Activated CD4-positive, alpha-beta T cell treated with anti-CD3 and anti-CD28 coated beads for 36 hours (primary cell): ENCODE measurements at regions of chr11 and their contacts with region 1.

Region 1: DNA sequence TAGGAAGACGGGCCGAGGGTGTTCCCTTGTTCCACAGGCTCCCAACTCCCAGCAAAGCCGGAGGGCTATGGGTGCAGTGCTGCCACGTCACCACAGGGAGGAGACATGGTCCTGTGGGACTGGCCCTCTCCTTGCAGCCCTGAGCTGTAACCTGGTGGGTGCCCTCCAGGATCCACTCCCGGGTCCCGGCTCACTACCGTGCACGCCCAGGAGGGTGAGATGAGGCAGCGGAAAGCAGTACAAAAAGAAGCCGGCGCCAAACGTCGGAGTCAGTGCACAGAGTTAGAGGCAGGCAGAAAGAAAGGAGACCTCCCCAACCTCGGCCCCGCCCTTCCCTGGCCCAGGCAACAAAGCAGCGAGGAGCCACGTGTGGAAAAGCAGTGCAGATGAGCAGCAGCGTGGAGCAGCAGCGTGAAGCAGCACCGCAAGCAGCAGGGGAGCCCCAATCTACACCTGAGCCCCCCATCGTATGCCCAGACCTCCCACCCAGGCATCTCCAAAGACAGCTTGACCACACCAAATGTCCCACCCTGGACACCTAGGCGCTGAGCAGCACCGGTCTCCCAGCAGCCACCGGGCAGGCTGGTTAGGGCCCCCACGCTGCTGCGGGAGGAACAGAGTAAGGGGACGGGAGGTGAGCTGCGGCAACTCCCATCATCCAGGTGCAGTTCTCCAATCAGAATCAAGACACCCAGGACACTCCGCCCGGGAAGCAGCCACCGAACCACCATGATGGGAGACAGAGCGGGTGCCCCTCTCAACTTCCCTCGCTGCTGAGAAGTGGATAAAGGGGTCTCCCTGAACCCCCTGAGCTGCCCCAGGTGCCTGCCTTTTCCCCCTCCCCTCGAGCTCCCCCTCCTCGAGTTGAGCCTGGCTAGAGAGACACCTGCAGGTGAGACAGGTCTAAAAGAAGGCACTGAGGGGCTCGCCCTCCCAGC is 28.8 kb downstream of the IGSF9B start:
- DNase-seq: peak; percentile 84
- ATAC-seq: peak; percentile 28
- H3K4me3 Mint-ChIP-seq: peak overlapping the region; percentile 62
- H3K27ac Mint-ChIP-seq: peak overlapping the region; percentile 95
- H3K4me1 Mint-ChIP-seq: peaks cover 33% of the 10 kb centered on the region
- H3K27me3 Mint-ChIP-seq: no peaks in the 10 kb centered on the region

Region 2: DNA sequence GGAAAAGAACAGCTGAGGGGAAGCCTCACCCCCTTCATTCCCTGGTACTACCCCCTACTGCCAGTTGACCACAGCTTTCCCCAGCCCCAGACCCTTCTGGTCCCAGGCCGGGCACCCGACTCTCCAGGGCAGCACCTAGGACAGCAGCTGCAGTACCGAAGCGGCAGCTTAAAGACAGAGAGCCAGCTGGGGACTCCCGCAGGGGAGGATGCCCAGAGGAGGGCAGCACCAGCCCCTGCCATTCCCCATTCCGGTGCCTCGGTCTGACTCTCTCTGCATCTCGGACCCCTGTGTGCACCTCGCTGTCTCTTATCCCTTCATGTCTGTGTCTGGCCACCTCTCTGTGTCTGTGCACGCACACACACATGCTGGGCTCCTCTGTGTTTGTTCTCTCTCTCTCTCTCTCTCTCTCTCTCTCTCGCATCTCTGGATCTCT is 19.4 kb after region 1 on chr11:
- CTCF ChIA-PET with region 1: interaction called, 20 read pairs
- POLR2A ChIA-PET with region 1: interaction called, 11 read pairs
- intact Hi-C with region 1: loop called (anchors 1 kb)
- DNase-seq: peak; percentile 87
- ATAC-seq: peak; percentile 27
- H3K4me3 Mint-ChIP-seq: peak overlapping the region; percentile 65
- H3K27ac Mint-ChIP-seq: peak overlapping the region; percentile 85
- H3K4me1 Mint-ChIP-seq: peaks cover 75% of the 10 kb centered on the region
- H3K27me3 Mint-ChIP-seq: no peaks in the 10 kb centered on the region

Region 3: DNA sequence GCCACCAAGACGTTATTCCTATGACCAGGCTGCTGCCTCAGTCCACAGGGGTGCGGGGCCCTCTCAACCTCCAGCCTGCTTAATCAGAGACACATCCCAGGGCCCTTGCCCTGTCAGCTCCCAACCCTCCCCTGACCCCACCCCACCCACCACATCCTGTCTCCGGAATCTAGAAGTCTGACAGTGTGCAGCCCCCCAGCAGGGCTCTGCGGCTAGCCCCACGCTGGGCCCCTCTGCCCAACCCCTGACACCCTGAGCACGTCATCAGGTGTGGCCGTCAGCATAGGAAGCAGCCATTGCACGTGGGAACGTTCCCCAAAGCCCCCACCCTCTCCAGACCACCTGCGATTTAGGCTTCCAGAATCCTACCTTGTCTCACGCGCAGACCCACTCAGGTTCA is 63.1 kb after region 1 on chr11:
- CTCF ChIA-PET with region 1: no interaction called
- POLR2A ChIA-PET with region 1: no interaction called
- intact Hi-C with region 1: no loop called
- DNase-seq: no peak
- ATAC-seq: peak; percentile 19
- H3K4me3 Mint-ChIP-seq: no peak overlapping the region
- H3K27ac Mint-ChIP-seq: no peak overlapping the region
- H3K4me1 Mint-ChIP-seq: no peaks in the 10 kb centered on the region
- H3K27me3 Mint-ChIP-seq: peaks cover 2% of the 10 kb centered on the region

Region 4: DNA sequence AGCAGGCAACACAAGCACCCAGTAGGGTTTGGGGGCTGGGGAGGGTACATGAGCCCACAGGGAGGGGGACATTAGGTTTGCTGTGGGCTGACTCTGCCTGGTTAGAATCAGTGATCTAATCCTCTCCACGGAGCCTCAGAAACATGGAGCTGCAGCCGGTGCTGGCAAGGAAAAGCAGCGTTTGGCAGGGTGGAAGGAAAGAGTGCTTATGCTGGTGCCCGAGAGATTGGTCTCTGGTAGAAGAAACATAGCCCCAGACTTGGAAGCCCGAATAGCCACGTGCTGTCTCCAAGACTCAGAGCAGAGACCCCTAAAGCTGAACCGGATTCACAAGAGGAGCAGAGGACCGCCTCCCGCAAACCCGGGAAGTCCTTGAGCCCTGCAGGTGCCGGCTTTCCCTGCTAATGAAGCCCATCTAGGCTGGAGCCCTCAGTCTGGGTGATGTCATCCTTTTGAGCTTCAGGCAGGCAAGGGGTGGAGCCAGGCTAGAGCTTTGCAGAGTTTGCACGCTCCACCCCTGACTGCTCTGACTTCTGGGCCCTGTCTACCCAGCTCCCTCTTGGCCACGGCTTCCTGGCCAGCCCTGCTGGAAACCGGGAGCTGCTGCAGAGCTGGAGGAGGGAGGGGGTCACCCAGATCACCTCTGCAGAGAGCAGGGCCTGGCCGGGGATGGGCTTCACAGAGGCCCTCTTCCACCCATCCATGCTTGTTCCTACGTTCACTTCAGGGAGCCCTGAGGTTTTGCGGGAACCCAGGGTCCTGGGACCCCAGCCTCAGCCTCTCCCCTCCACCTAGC is 105.9 kb after region 1 on chr11:
- CTCF ChIA-PET with region 1: interaction called, 12 read pairs
- POLR2A ChIA-PET with region 1: no interaction called
- intact Hi-C with region 1: loop called (anchors 1 to 5 kb)
- DNase-seq: peak; percentile 84
- ATAC-seq: peak; percentile 91
- H3K4me3 Mint-ChIP-seq: no peak overlapping the region
- H3K27ac Mint-ChIP-seq: peak overlapping the region; percentile 7
- H3K4me1 Mint-ChIP-seq: peaks cover 54% of the 10 kb centered on the region
- H3K27me3 Mint-ChIP-seq: peaks cover 4% of the 10 kb centered on the region

Region 5: DNA sequence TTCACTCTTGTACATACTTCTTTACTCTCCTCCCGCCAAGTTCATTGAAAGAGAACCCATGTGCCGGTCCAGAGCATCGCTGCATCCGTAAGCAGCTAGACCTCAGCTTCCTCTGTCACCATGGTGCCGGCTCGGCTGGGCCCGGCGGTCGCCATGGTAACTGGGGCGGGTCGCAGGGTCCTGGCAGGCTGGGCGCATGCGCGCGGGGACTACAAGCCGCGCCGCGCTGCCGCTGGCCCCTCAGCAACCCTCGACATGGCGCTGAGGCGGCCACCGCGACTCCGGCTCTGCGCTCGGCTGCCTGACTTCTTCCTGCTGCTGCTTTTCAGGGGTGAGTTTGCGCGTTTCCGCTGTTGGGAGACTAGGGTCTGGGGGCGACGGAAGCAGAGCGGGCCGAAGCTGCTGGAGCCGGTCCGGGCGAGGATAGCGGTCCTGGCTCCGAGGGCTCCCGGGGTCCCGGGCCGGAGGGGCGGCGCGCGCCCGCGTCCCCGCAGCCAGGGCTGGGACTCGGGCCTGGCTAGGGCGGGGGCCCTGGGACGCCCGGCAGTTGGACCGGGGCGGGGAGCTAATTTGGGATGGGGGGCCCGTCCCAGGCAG is 141.0 kb after region 1 on chr11 and contains the start of gene JAM3:
- CTCF ChIA-PET with region 1: no interaction called
- POLR2A ChIA-PET with region 1: no interaction called
- intact Hi-C with region 1: loop called in 1 of 2 experiments (anchors 1 kb)
- DNase-seq: peak; percentile 98
- ATAC-seq: peak; percentile 96
- H3K4me3 Mint-ChIP-seq: peak within 1 kb of the TSS; percentile 93
- H3K27ac Mint-ChIP-seq: peak within 1 kb of the TSS; percentile 83
- H3K4me1 Mint-ChIP-seq: peaks cover 22% of the 10 kb centered on the region
- H3K27me3 Mint-ChIP-seq: peaks cover 9% of the 10 kb centered on the region
- total RNA-seq, gene JAM3: 15.3 to 17.5 TPM

Region 6: DNA sequence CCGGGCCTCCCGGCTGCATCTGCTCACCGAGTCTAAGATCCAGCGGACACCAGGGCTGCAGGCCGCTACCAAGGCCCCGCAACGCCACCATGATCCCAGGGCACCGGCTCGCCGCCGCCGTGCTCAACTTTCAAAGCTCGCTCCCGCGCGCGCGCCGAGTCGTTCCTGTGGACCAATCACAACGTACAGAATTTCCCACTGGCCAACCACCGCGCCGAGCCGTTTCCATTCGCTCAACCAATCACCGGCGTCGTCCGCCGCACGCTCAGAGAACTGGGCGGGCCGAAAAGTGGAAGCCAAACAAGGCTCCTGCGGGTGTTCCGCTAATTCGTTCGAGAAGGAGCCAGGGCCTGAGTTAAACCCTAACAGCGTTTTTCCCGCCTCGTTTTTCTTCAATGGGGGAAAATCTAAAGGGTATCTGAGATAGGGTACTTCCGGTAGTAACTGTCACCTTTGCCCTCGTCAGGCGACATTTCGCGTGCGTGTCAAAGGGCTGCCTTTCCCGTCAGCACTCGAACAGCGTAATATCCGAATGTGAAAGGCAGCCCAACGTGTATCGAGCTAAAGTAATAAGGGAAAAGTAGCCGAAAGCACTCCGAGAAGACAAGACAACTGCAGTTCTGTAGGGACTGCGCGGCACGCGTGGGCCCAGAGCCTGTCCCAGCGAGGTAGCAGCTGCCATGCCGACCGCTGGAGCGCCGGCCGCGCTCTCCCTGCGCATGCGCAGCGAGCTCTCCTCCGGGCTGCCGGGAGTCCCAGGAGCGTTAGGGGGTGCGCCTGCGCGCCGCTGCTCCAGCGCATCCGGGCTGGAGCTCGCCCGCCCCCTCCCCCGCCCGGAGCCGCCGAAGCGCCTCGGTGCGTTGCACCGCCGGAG is 296.1 kb after region 1 on chr11 and contains the starts of genes NCAPD3 and VPS26B:
- CTCF ChIA-PET with region 1: no interaction called
- POLR2A ChIA-PET with region 1: no interaction called
- intact Hi-C with region 1: loop called in 1 of 2 experiments (anchors 1 kb)
- DNase-seq: peak; percentile 98
- ATAC-seq: peak; percentile 81
- H3K4me3 Mint-ChIP-seq: peak within 1 kb of the TSS; percentile 99
- H3K27ac Mint-ChIP-seq: peak within 1 kb of the TSS; percentile 98
- H3K4me1 Mint-ChIP-seq: peaks cover 59% of the 10 kb centered on the region
- H3K27me3 Mint-ChIP-seq: no peaks in the 10 kb centered on the region
- total RNA-seq, gene NCAPD3: 78.9 to 92.1 TPM
- total RNA-seq, gene VPS26B: 32.4 to 32.5 TPM